Ovary (tissue), 10 donors: ENCODE measurements at regions of chr16 and their contacts with region 1.

Region 1: DNA sequence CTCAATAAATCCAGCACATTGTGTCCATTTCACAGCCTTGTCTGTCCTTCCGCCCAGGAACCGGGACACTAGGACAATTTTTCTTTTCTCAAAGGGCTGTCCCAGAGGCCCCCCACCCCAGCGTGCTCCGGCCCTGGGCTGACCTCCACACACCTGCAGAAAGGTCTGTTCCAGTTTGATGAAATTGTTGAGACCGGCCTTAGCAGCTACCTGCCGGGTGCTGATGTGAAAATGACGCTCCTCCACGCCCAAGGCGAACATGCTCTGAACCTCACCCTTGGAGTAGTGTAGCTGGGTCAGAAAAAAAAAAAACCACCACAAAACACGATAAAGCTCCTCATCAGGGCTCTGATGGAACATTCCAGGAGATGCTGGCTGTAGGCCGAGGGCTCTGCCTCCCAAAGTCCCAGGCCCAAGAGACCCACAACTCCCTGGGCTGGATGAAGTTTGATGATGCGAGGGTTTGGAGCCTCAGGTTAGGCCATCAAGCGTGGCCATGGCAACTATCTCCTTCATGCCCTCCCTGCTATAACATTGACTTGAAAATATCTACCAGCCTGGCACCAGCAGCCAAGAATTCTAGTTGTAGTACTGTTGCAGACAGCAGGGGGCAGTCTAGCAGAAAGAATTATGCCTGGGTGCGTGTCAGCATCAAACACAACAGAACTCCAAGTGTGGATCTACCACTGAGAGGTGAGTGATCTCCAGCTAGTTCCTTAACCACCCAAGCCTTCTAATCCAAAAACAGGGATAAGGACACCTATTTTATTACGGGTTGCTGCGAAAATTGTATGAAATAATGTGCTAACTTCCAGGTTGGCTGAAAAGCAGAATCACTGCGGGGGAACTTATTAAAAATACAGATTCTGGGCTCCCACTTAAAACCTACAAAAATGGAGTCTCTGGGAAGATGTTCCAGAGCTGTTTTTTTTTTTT is 62.1 kb downstream of the RMI2 start:
- DNase-seq: peak in 3 of 5 donors; percentile 54 to 75 (median 67)
- H3K4me3 ChIP-seq: no peak overlapping the region
- H3K27ac ChIP-seq: no peak overlapping the region
- H3K4me1 ChIP-seq: peaks cover 1% of the 10 kb centered on the region
- H3K27me3 ChIP-seq: no peaks in the 10 kb centered on the region
- CTCF ChIP-seq: peak in 2 of 3 donors; percentile 62 to 83
- EP300 ChIP-seq: no peak
- POLR2A ChIP-seq: no peak

Region 2: GRCh38 chr16:11459722-11460121 is 52.4 kb after region 1 on chr16:
- intact Hi-C with region 1: loop called in 1 of 4 experiments (anchors 2 kb)
- DNase-seq: no peak
- H3K4me3 ChIP-seq: no peak overlapping the region
- H3K27ac ChIP-seq: no peak overlapping the region
- H3K4me1 ChIP-seq: no peaks in the 10 kb centered on the region
- H3K27me3 ChIP-seq: no peaks in the 10 kb centered on the region
- CTCF ChIP-seq: no peak
- EP300 ChIP-seq: no peak
- POLR2A ChIP-seq: no peak

Region 3: DNA sequence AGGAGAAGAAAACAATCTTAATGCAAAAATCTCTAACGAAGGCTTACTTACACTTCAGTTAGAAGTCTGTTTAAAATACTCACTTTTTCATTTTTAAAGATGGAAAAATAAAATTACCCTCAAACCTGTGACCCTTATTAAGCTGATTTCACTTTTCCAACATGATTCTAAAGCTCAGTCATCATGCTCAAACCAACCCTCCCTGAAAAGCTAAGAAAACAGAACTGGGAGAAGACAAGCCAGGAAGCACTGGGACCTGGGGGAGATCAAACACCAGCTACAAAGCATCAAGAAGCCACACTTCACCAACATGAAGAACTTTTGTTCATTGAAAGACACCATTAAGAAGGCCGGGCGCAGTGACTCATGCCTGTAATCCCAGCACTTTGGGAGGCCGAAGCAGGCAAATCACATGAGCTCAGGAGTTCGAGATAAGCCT is 90.6 kb after region 1 on chr16:
- intact Hi-C with region 1: loop called in 1 of 4 experiments (anchors 5 kb)
- DNase-seq: peak in 3 of 5 donors; percentile 56 to 71 (median 61)
- H3K4me3 ChIP-seq: no peak overlapping the region
- H3K27ac ChIP-seq: peak overlapping the region; percentile 77 to 89
- H3K4me1 ChIP-seq: peaks cover 20% of the 10 kb centered on the region
- H3K27me3 ChIP-seq: no peaks in the 10 kb centered on the region
- CTCF ChIP-seq: no peak
- EP300 ChIP-seq: no peak
- POLR2A ChIP-seq: no peak

Region 4: DNA sequence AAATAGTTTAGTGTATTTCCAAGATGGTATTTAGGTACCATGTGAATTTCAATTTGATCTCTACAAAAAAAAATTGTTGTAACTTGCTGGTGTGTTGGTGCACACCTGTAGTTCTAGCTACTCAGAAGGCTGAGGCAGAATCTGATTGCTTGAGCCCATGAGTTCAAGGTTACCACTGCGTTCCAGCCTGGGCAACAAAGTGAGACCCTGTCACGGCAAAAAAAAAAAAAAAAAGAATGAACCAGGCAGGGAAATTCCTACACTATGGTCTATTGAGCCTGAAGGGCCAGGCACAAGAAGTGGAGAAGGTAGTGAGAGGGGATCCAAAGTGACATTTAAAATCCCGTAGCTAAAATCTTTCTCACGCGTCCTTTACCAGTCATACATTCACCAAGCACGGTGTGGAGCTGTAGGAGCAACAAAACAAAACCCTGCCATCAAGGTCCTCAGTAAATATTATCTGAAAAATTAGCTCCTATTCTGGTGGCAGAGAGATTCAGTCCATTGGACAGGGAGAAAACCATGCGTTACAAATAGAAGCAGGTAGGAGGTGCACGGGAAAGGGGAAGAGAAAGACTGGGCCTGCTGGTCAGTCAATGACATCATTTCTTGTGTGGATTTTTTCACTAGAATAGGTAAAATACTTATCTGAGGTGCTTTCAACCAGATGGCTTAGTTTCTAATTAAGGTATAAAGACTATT is 308.1 kb after region 1 on chr16:
- intact Hi-C with region 1: loop called in 1 of 4 experiments (anchors 5 kb)
- DNase-seq: no peak
- H3K4me3 ChIP-seq: no peak overlapping the region
- H3K27ac ChIP-seq: no peak overlapping the region
- H3K4me1 ChIP-seq: no peaks in the 10 kb centered on the region
- H3K27me3 ChIP-seq: no peaks in the 10 kb centered on the region
- CTCF ChIP-seq: no peak
- EP300 ChIP-seq: no peak
- POLR2A ChIP-seq: no peak